HEK293T (cell line): ENCODE measurements at regions of chr12 and their contacts with region 1.

Region 1: DNA sequence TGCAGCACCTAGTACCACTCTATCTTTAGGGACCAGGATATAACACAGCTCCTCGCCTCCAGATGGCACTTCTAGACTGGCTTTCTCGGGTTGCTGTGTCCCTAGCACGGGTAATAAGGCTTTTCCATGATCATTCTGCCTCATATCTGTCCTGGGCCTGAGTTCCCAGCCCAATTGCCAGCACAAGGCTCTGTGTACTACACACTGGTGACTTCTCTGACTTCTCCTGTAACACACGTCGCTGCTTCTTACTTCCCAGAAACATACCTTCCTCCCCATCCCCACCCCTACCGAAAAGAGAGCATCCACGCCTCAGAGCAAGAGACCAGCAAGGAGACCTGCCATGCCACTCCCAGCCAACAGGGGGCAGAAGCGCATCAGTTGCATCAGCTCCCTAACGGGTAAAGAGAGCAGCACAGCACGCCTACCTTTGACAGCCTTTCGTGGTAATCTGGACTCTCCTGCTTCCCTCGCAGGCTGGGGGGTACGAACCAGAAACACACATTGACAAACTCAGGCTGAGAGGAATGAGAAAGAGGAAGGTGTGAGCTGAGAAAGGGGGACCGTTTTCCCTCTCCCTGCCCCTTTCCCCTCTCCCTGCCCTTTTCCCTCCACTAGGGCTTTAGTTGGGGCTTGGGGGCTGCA is 21.2 kb upstream of the ZNF740 start:
- DNase-seq: peak; percentile 94

Region 2: DNA sequence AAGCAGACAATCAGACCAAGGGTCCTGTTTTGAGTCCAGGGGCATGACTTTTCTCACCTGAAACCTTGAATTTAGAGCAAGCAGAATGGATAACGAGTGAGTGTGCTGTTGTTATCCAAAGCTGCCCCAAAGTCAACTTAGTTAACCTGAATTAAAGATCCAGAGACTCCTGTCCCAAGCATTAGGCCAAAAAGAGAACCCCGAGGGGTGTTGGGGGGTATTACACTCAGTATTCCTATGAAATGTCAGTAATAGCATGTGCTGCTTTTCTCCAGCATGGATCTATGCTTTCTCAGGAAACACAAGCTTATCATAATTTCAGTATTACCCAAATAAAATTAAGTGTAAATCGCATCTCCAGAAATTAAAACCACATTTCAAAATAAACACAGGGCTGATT is 134.1 kb before region 1 on chr12:
- CTCF ChIA-PET with region 1: no interaction called
- POLR2A ChIA-PET with region 1: no interaction called
- DNase-seq: no peak

Region 3: DNA sequence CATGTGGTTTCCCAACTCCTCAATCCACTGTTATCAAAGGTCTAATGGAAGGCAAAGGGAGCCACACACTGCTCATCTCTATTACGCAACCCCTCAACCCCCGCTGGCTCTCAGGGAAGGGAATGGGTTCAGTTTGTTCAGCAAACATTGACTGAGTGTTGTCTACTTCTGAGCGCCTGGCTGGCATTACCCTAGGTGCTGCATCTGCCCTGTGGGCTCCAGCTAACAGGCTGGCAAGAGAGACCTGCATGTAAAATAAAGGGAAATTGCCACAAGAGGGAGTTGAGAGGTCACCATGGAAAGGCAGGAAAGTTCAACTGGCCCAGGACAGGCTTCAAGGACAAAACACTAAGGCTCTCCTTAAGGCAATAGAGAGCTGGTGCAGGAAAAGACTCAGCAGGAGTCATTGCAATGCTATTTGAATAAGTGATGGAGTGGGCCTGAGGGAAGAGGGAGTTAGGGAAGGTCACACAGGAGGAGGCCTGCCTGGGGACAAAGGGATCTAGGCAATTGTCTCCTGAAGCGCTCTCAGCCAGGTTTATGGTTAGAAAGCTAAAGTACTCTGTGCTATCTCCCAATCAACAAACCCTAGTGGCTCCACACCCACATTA is 15.7 kb after region 1 on chr12:
- CTCF ChIA-PET with region 1: interaction called, 15 read pairs
- POLR2A ChIA-PET with region 1: interaction called, 27 read pairs
- DNase-seq: no peak

Region 4: DNA sequence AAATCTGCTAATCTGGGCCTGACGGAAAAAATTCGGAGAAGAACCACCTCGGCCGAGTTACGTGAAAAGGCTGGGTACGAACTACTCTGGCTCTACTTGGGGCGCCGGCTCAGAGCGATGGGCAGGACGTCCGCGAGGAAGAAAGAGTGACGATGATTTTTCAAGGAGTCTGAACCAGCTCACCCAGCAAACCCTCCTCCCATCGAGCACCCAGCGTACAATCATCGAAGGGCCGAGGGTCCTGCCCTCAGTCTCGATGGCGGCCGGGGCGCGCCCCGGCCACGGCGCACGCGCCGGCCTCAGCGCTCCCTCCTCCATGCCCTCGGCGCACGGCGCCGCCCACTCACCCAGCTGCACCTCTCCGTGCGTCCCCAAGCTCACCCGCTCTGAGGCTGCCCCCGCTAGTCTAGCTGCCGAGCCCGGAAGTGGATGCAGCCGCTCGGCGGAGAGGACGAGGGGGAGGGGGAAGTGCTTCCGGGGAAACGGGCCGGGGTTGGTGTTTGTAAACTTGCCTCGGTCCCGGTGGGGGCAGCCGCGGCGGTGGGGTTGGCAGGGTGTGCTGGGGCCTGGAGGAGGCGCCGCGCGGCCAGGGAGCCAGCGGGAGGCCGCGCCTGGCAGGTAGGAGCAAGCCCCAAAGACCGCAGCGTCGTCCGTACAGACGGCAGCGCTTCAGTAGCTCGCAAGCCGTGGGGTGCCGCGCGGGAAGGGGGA is 21.1 kb after region 1 on chr12 and contains the starts of genes CSAD and ZNF740:
- CTCF ChIA-PET with region 1: interaction called, 15 read pairs
- POLR2A ChIA-PET with region 1: interaction called, 27 read pairs
- DNase-seq: peak; percentile 98

Region 5: DNA sequence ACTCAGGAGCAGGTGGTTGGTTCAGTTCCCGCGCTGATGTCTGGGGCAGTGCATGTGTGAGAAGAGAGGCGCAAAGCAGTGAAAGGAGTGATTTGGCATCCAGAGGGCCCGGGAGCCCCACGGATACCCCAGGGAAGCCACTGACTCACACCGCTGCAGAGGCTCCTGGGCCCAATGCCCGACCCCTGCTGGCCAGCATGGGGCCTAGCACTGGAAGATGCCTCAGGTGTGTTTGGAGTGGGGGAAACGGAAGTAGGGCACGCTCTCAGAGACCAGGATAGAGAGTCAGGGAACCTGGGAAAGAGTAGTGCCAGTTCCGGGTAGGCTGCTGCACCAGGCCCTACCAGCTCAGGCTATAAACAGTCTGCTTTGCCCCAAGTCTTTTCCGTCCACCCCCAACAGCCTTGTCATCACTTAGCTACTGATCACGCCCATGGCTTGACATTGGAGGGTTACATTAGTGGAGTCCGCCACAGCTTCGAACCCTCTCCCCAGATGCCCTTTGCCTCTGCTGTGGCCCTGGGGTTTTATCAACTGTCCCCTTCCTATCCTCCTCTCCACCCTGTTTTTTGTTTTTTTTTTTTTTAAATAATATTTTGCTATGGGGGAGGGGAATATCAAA is 30.9 kb after region 1 on chr12:
- CTCF ChIA-PET with region 1: interaction called, 21 read pairs
- POLR2A ChIA-PET with region 1: interaction called, 5 read pairs
- DNase-seq: peak; percentile 73

Region 6: DNA sequence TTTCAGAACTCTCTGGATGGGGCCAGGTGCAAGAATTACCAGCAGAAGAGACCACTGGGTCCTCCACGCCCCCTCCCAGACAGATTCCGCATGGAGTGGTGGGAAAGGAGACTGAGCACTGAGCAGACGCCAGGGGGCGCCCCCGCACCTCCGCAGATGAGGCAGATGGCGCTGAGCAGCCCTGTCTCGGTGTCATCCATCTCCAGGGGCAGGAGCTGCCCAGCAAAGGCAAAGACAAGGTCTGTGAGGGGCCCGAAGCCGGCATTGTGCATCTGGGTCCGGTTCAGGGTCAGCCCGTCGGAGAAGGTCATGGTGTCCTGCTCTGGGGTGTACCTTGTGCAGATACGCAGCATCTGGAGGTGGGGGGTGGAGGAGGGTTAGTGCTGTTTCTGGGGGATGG is 54.0 kb after region 1 on chr12:
- CTCF ChIA-PET with region 1: interaction called, 17 read pairs
- POLR2A ChIA-PET with region 1: no interaction called
- DNase-seq: peak; percentile 88

Region 7: DNA sequence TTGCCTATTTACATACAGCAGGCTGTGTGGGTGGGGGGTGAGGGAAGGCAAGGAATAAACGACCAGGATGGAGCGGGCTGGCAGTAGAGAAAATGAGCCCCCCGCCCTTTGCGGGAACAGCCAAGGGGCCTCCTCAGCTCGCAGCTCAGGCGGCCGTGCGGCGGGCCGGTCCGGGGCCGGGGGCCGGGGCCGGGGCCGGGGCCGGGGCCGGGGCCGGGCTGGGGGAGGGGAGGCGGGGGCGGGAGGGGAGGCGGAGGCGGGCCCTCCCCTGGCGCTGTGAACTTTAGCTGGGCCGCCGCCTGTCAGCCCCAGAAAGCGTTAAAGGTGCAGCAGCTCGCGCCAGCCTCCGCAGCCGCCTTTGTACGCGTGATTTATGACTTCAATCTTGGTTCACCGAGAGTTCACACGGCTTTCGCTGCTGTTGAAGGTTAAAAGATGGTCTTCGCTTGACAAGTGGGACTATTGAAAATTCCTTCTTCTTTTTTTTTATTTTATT is 923.1 kb after region 1 on chr12:
- CTCF ChIA-PET with region 1: interaction called, 10 read pairs
- POLR2A ChIA-PET with region 1: no interaction called
- DNase-seq: peak; percentile 38